ENCODE measurements at regions of chr1 and their contacts with region 1.

Region 1: GRCh38 chr1:5745776-5746610 is 246.2 kb downstream of the NPHP4 start:
- DNase-seq: peak; percentile 92
- H3K4me3 ChIP-seq: no peak overlapping the region; a peak in 1 of 4 replicates
- H3K27ac ChIP-seq: no peak overlapping the region; a peak in 1 of 4 replicates
- H3K4me1 ChIP-seq: peaks cover 0 to 25% of the 10 kb centered on the region in 2 experiments; a peak in 1 of 4 replicates
- H3K27me3 ChIP-seq: no peaks in the 10 kb centered on the region
- CTCF ChIP-seq: peak; percentile 41
- EP300 ChIP-seq: no peak
- RAD21 ChIP-seq: peak; percentile 91

Region 2: DNA sequence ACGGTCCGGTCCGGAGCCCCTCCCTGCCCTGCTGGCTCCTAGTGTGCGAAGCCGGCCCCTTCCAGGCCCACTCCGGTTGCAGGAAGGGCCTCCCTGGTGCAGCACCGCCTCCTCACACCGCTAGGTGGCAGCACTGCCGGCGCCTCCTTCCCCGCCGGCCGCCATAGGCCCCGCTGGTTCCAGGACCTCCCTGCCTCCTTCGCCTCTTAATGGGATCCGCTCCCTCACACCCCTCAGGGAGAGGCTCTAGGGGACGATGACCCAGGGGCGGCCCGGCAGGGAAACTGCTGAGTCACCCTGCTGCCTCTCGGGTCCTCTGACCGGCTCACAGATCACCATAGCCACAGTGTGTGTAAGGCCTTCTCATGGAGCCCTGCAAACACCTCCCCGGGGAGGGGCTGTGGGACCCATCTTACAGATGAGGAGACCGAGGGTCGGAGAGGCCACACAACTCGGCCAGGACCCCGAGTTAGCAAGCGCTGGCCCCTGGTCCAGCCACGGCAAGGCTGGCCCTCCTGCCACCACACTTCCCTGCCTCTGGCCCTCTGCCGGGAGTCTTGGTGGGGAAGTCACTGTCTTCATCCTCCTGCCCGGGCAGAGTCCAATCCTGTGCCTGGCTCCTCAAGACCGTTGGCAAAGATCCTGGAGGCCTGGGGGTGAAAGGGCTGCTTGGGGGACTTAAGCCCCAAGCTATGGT is 1093.2 kb before region 1 on chr1:
- CTCF ChIA-PET with region 1: interaction called, 61 read pairs
- POLR2A ChIA-PET with region 1: interaction called, 3 read pairs
- DNase-seq: peak; percentile 92
- H3K4me3 ChIP-seq: no peak overlapping the region
- H3K27ac ChIP-seq: no peak overlapping the region
- H3K4me1 ChIP-seq: peaks cover 0 to 9% of the 10 kb centered on the region in 2 experiments; a peak in 1 of 4 replicates
- H3K27me3 ChIP-seq: no peaks in the 10 kb centered on the region
- CTCF ChIP-seq: peak; percentile 67
- EP300 ChIP-seq: no peak
- RAD21 ChIP-seq: peak; percentile 59

Region 3: DNA sequence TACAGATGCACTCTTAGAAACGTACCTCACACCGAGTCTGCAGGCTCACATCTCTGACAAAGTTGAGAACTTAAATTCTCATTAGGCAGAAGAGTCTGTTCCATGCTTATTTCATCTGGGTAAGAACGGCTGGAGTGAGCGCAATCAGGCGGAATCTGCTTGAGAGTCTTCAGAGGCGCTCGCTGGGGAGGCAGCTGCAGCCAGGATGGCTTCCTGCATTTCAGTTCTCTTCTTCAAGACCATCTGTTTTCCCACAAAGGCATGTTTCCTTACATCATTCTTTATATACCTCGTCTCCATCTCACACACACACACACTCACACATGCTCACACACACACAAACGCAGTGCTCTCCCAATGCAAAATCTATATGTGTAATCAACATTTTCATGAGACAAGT is 594.5 kb before region 1 on chr1:
- CTCF ChIA-PET with region 1: no interaction called
- POLR2A ChIA-PET with region 1: no interaction called
- DNase-seq: no peak
- H3K4me3 ChIP-seq: no peak overlapping the region
- H3K27ac ChIP-seq: no peak overlapping the region
- H3K4me1 ChIP-seq: peaks cover 0 to 4% of the 10 kb centered on the region in 2 experiments; a peak in 1 of 4 replicates
- H3K27me3 ChIP-seq: no peaks in the 10 kb centered on the region
- CTCF ChIP-seq: no peak
- EP300 ChIP-seq: no peak
- RAD21 ChIP-seq: no peak

Region 4: GRCh38 chr1:5231541-5232315 is 514.3 kb before region 1 on chr1:
- CTCF ChIA-PET with region 1: no interaction called
- POLR2A ChIA-PET with region 1: no interaction called
- DNase-seq: no peak
- H3K4me3 ChIP-seq: no peak overlapping the region
- H3K27ac ChIP-seq: no peak overlapping the region
- H3K4me1 ChIP-seq: peaks cover 0 to 19% of the 10 kb centered on the region in 2 experiments; a peak in 2 of 4 replicates
- H3K27me3 ChIP-seq: no peaks in the 10 kb centered on the region
- CTCF ChIP-seq: no peak
- EP300 ChIP-seq: no peak
- RAD21 ChIP-seq: no peak

Region 5: GRCh38 chr1:5637171-5637570 is 108.8 kb before region 1 on chr1:
- CTCF ChIA-PET with region 1: interaction called, 35 read pairs
- POLR2A ChIA-PET with region 1: no interaction called
- DNase-seq: peak; percentile 48
- H3K4me3 ChIP-seq: no peak overlapping the region
- H3K27ac ChIP-seq: no peak overlapping the region
- H3K4me1 ChIP-seq: no peaks in the 10 kb centered on the region; a peak in 1 of 4 replicates
- H3K27me3 ChIP-seq: no peaks in the 10 kb centered on the region
- CTCF ChIP-seq: no peak
- EP300 ChIP-seq: no peak
- RAD21 ChIP-seq: peak; percentile 56

Region 6: DNA sequence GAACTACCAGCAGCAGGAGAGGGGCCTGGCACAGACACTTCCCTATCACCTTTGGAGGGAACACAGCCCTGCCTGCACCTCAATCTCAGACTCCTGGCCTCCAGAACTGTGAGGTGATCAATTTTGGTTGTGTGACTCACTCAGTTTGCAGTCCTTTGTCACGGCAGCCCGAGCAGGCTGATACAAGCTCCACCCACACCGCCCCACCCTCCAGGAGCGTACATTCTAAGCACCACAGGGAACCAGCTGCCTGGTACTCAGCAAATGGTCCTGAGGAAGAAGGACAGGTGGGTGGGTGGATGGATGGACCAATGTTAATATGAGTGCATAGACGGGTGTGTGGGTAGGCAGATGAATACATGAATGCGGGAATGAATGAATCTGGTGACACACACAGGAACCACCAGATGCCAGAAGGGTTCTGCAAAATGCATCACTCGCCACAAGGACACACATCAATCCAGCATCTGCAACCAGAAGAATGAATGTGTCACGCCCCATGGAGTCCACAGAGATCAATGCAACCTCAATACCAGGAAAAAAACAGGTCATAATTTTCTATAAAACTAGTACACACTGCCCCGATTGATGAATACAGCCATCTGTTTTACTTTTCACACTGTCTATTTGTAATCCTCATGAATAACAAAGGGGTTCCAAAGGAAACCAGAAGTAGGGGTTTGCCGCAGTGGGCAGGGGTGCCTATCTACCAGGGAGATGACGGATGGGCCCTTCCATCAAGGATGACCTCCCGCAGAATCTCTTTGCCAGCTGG is 38.2 kb before region 1 on chr1:
- CTCF ChIA-PET with region 1: interaction called, 15 read pairs
- POLR2A ChIA-PET with region 1: no interaction called
- DNase-seq: no peak
- H3K4me3 ChIP-seq: no peak overlapping the region
- H3K27ac ChIP-seq: no peak overlapping the region
- H3K4me1 ChIP-seq: peaks cover 0 to 7% of the 10 kb centered on the region in 2 experiments; a peak in 1 of 4 replicates
- H3K27me3 ChIP-seq: no peaks in the 10 kb centered on the region
- CTCF ChIP-seq: no peak
- EP300 ChIP-seq: no peak
- RAD21 ChIP-seq: no peak

Region 7: GRCh38 chr1:5734996-5735395 is 11.0 kb before region 1 on chr1:
- CTCF ChIA-PET with region 1: interaction called, 42 read pairs
- POLR2A ChIA-PET with region 1: no interaction called
- DNase-seq: no peak
- H3K4me3 ChIP-seq: no peak overlapping the region
- H3K27ac ChIP-seq: no peak overlapping the region
- H3K4me1 ChIP-seq: peaks cover 0 to 2% of the 10 kb centered on the region in 2 experiments; a peak in 1 of 4 replicates
- H3K27me3 ChIP-seq: no peaks in the 10 kb centered on the region
- CTCF ChIP-seq: no peak
- EP300 ChIP-seq: no peak
- RAD21 ChIP-seq: no peak

Region 8: DNA sequence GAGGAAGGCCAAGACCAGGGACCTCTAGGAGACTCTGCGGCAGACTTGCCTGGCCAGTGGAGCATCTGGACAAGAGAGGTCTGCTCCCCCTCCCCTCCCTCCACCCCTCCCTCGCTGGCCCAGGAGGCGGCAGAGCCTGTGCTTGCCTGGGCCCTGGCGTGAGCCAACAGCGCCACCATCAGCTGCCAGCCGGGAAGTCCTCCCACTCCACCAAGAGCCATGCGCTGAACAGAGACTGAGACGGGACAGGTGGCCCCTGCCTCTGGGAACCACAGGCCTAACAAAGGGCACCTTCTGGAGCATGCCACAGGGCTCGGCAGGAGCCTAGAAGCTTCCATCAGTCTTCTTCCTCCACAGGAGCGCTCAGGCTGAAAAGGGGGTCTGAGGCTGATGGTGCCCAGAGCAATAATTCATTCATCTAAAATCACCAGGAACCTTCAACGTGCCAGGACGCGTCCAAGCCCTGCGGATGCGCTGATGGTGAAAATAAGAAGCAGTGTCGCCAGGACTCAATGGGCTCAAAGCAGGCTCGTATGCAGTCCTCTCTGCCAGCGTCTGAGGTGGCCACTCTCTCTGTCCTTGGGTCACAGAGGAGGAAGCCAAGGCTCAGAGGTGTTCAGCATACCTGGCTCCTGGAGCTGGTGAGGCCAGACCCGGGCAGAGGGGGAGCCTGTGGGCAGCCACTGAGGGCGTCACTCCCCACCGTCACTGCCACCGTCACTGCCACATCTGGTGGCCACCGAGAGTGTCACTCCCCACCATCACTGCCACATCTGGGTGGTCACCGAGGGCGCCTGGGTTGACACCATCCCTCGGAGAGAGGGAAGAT is 85.0 kb after region 1 on chr1:
- CTCF ChIA-PET with region 1: interaction called, 21 read pairs
- POLR2A ChIA-PET with region 1: no interaction called
- DNase-seq: peak; percentile 83
- H3K4me3 ChIP-seq: no peak overlapping the region
- H3K27ac ChIP-seq: no peak overlapping the region; a peak in 1 of 4 replicates
- H3K4me1 ChIP-seq: peaks cover 0 to 15% of the 10 kb centered on the region in 2 experiments; a peak in 1 of 4 replicates
- H3K27me3 ChIP-seq: no peaks in the 10 kb centered on the region
- CTCF ChIP-seq: no peak
- EP300 ChIP-seq: no peak
- RAD21 ChIP-seq: peak; percentile 76

Region 9: GRCh38 chr1:5975133-5975880 is 229.3 kb after region 1 on chr1:
- CTCF ChIA-PET with region 1: interaction called, 16 read pairs
- POLR2A ChIA-PET with region 1: no interaction called
- DNase-seq: peak; percentile 84
- H3K4me3 ChIP-seq: peak overlapping the region in 1 of 2 experiments; percentile 39; a peak in 1 of 4 replicates
- H3K27ac ChIP-seq: no peak overlapping the region
- H3K4me1 ChIP-seq: peaks cover 0 to 21% of the 10 kb centered on the region in 2 experiments; a peak in 1 of 4 replicates
- H3K27me3 ChIP-seq: no peaks in the 10 kb centered on the region
- CTCF ChIP-seq: peak; percentile 71
- EP300 ChIP-seq: no peak
- RAD21 ChIP-seq: peak; percentile 96

Measured in SK-N-SH (cell line).